ENCODE measurements at regions of chr17 and their contacts with region 1.

Region 1: GRCh38 chr17:3636154-3636907 is at the starts of genes CTNS and SHPK:
- DNase-seq: peak; percentile 94
- ATAC-seq: peak; percentile 95
- H3K4me3 ChIP-seq: peak within 1 kb of the TSS; percentile 86
- H3K27ac ChIP-seq: peak within 1 kb of the TSS; percentile 86
- H3K4me1 ChIP-seq: peaks cover 6% of the 10 kb centered on the region; the same call in 1 of the 2 replicates
- H3K27me3 ChIP-seq: no peaks in the 10 kb centered on the region
- CTCF ChIP-seq: no peak
- total RNA-seq, gene CTNS: 10.2 and 17.5 TPM in 2 replicates
- total RNA-seq, gene SHPK: 17.7 and 22.4 TPM in 2 replicates

Region 2: DNA sequence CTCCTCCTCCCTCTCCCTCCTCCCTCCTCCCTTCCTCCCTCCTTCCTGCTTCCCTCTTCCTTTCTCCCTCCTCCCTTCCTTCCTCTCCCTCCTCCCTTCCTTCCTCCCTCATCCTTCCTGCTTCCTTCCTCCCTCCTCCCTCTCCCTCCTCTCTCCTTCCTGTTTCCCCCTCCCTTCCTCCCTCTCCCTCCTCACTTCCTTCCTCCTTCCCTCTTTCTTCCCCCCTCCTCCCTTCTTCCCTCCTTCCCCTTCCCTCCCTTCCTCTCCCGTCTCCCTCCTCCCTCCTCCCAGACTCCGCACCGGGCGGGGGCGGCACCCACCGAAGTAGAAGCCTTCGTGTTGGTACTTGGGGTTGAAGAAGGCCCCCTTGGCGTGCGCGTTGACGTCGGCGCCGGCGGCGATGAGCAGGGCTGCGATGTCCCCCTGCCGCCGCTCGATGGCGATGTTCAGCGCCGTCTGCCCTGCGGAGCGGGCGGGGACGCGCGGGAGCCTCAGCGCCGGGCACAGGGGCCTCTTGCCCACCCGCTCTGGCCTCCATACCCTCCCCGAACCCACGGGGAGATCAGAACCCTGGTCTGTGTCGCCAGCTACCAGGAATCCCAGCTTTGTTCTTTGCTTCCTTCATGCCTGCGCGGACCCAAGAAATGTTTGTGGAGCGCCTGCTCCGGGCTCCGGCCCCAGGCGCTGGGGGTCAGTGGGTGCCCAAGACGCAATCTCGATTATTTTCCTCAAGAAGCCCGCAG is 100.9 kb before region 1 on chr17:
- CTCF ChIA-PET with region 1: no interaction called
- POLR2A ChIA-PET with region 1: no interaction called
- intact Hi-C with region 1: loop called (anchors 1 kb)
- DNase-seq: peak; percentile 77
- ATAC-seq: peak; percentile 74
- H3K4me3 ChIP-seq: peak overlapping the region; percentile 61
- H3K27ac ChIP-seq: peak overlapping the region; percentile 67
- H3K4me1 ChIP-seq: peaks cover 3% of the 10 kb centered on the region; the same call in 1 of the 2 replicates
- H3K27me3 ChIP-seq: no peaks in the 10 kb centered on the region
- CTCF ChIP-seq: peak; percentile 74

Region 3: DNA sequence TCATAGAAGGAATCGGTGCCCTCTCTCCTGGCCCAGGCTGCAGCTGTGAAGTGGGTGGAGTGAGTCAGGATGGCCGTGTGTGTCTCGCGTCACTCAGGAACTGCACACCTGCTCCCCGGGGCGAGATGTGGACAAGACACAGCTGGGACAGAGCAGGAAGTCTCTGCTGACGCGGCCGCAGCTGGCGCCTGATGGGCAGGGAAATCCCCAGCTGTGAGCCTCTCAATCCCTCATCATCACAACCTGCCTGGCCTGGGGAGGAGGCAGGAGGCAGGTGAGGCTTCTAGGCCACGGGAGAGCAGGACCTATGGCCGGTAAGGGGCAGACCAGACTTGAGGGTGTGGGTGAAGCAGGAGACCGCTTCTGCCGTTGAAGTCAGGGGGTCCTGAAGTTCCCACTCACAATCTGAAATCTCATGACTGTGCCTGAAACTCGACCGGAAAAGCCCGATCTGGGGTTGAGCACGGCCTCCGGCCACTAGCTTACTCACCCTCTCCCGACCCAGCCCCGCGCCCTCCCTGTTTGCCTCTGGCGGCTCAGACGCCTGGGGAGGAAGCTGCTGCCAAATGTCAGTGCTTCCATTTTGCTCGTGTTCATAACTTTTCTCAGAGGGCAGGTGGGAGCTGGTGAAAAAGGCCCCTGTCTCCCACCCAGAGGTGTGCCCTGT is 77.6 kb before region 1 on chr17:
- CTCF ChIA-PET with region 1: no interaction called
- POLR2A ChIA-PET with region 1: interaction called, 11 read pairs
- intact Hi-C with region 1: no loop called
- DNase-seq: peak; percentile 74
- ATAC-seq: peak; percentile 80
- H3K4me3 ChIP-seq: peak overlapping the region; percentile 35; the same call in 1 of the 2 replicates
- H3K27ac ChIP-seq: peak overlapping the region; percentile 99
- H3K4me1 ChIP-seq: peaks cover 33% of the 10 kb centered on the region
- H3K27me3 ChIP-seq: no peaks in the 10 kb centered on the region
- CTCF ChIP-seq: no peak

Region 4: GRCh38 chr17:3575511-3575910 is 60.8 kb before region 1 on chr17:
- CTCF ChIA-PET with region 1: no interaction called
- POLR2A ChIA-PET with region 1: no interaction called
- intact Hi-C with region 1: loop called (anchors 2 kb)
- DNase-seq: peak; percentile 95
- ATAC-seq: peak; percentile 89
- H3K4me3 ChIP-seq: no peak overlapping the region
- H3K27ac ChIP-seq: peak overlapping the region; percentile 100
- H3K4me1 ChIP-seq: peaks cover 24% of the 10 kb centered on the region
- H3K27me3 ChIP-seq: no peaks in the 10 kb centered on the region
- CTCF ChIP-seq: no peak

Region 5: DNA sequence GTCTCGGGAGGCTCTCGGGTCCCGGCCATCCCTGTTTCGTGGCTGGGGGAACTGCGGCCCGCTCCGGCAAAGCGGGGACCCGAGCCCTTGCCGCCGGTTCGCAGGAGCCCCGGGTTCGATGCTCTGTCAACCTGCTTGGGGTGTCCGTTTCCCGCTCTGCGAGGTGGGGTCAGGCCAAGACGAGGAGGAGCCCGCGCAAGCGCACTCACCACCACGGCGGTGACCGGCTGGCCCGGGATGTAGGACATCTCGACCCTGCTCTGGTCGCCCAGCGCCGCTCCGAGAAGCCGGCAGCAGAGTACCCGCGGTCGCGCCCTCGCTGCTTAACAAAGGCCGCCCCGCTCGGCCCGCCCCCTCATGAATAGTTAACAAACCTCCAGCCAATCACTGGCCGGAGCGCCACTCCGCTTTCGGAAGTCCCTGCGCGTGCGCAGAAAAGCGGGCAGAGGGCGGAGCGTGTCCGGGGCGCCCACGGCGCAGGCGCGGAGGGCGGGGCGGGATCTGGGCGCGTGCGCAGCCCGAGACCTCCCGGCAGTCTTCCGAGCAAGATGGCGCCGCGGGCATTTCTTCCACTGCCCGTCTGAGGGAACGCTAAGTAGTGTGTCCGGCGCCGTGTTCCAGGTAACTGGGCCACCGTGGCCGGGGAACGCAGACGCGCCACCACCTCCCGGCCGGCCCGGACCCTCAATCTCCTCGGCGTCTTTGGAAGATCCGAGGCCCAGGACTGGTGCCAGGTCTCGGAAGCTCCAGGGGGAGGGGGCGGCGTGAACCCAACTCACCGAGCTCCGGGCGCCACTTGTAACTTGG is 32.2 kb after region 1 on chr17 and contains the starts of genes EMC6 and TAX1BP3:
- CTCF ChIA-PET with region 1: interaction called, 3 read pairs
- POLR2A ChIA-PET with region 1: no interaction called
- intact Hi-C with region 1: loop called (anchors 2 kb)
- DNase-seq: peak; percentile 96
- ATAC-seq: peak; percentile 89
- H3K4me3 ChIP-seq: peak within 1 kb of the TSS; percentile 99
- H3K27ac ChIP-seq: peak within 1 kb of the TSS; percentile 83
- H3K4me1 ChIP-seq: peaks cover 11% of the 10 kb centered on the region; the same call in 1 of the 2 replicates
- H3K27me3 ChIP-seq: no peaks in the 10 kb centered on the region
- CTCF ChIP-seq: no peak
- total RNA-seq, gene EMC6: 56.5 and 60.4 TPM in 2 replicates
- total RNA-seq, gene TAX1BP3: 87.7 and 100 TPM in 2 replicates